ENCODE measurements at regions of chr17 and their contacts with region 1.

Region 1: DNA sequence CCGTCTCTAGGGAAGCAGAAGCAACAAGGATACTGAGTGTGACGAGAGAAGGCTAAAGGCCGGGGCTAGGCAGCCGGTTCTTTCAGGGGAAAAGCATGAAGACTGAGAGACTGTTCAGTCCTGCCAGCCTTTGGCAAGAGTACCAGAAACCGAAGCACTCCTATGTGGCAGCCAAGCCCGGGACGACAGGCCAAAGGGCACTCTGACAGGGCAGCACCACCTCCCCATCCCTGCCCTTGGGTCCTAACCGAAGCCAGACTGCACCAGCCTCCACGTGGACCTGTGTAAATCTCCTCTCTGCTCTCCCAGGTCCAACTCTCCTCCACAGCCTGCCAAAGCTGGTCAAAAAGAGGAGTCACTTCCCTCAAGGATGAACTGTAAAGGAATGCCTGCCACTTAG is 23.5 kb upstream of the ALOX15 start:
- DNase-seq: no peak
- H3K4me3 ChIP-seq: no peak overlapping the region
- H3K27ac ChIP-seq: no peak overlapping the region
- H3K4me1 ChIP-seq: no peaks in the 10 kb centered on the region
- H3K27me3 ChIP-seq: peaks cover 22% of the 10 kb centered on the region; the same call in 1 of the 2 replicates
- CTCF ChIP-seq: no peak

Region 2: DNA sequence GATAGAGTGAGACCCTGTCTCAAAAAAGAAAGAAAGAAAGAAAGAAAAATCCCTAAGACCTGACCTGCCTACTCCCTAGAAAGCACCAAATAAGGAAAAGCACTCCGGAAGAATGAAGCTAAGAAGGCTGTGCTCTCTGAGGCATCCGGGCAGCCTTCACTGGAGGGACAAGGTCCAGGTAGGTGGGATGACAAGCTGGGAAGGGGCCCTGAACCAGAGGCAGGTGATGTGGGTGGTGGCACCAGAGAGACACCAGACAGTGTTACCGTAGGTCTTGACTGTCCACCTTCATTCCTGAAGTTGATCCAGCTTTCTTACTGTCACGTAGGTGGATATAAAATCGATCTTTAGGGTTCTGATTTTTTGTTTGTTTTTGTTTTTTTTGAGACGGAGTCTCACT is 54.4 kb before region 1 on chr17:
- CTCF ChIA-PET with region 1: interaction called, 12 read pairs
- POLR2A ChIA-PET with region 1: no interaction called
- intact Hi-C with region 1: no loop called
- DNase-seq: no peak
- H3K4me3 ChIP-seq: no peak overlapping the region
- H3K27ac ChIP-seq: no peak overlapping the region
- H3K4me1 ChIP-seq: no peaks in the 10 kb centered on the region
- H3K27me3 ChIP-seq: peaks cover 36% of the 10 kb centered on the region
- CTCF ChIP-seq: no peak

Region 3: GRCh38 chr17:5785867-5786509 is 1121.0 kb after region 1 on chr17:
- CTCF ChIA-PET with region 1: no interaction called
- POLR2A ChIA-PET with region 1: no interaction called
- intact Hi-C with region 1: no loop called
- DNase-seq: no peak
- H3K4me3 ChIP-seq: no peak overlapping the region
- H3K27ac ChIP-seq: no peak overlapping the region
- H3K4me1 ChIP-seq: no peaks in the 10 kb centered on the region
- H3K27me3 ChIP-seq: peaks cover 52% of the 10 kb centered on the region
- CTCF ChIP-seq: no peak